Caco-2 (cell line): ENCODE measurements at regions of chr2 and their contacts with region 1.

Region 1: DNA sequence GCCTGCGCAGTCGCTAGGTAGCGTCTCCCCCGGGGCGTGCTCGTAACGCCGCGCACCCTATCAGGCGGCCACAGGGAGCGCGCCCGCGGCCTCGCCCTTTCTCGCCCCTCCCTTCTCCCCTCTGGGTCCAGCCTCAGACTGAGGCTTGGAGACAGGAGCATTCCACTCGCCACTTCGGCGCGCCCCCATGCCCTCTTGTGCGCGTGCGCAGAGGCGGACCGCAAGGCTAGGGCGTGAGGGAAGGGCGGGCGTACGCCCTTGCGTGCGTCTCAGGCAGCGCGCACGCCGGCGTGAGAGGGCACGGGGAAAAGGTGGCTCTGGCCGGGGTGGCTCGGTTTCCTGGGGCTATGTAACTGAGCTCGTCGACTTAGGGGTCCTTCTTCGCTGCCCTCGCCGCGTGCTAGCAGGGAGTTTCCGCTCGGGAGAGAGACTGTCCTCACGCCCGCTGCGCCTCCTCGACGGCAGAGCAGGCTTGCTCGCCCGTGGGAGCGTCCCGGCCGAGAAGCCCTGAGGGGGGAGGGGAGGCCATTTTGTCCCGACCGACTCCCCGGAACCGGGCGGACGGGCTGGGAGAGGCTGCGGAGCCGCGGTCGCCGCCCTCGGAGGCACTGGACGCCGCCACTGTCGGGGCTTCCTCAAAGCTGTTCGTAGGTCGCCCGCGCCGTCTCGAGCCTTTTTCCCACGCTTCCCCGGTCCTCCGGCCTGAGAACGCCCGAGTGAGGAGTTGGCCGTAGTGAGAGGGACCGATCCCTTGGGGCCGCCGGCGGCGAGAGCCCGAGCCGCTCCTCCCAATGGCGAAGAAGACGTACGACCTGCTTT is at the start of gene RAB10:
- DNase-seq: peak; percentile 100
- H3K4me3 ChIP-seq: peak within 1 kb of the TSS; percentile 76
- H3K4me3 Mint-ChIP-seq: peak within 1 kb of the TSS; percentile 76
- H3K27ac Mint-ChIP-seq: peak within 1 kb of the TSS; percentile 60
- H3K4me1 ChIP-seq: 0 out of 2 replicates have a peak, but pooled peaks cover 15% of the 10 kb centered on the region
- H3K4me1 Mint-ChIP-seq: peaks cover 18% of the 10 kb centered on the region
- H3K27me3 ChIP-seq: no peaks in the 10 kb centered on the region
- H3K27me3 Mint-ChIP-seq: no peaks in the 10 kb centered on the region
- CTCF ChIP-seq: no peak
- total RNA-seq, gene RAB10: 203 and 213 TPM in 2 replicates

Region 2: DNA sequence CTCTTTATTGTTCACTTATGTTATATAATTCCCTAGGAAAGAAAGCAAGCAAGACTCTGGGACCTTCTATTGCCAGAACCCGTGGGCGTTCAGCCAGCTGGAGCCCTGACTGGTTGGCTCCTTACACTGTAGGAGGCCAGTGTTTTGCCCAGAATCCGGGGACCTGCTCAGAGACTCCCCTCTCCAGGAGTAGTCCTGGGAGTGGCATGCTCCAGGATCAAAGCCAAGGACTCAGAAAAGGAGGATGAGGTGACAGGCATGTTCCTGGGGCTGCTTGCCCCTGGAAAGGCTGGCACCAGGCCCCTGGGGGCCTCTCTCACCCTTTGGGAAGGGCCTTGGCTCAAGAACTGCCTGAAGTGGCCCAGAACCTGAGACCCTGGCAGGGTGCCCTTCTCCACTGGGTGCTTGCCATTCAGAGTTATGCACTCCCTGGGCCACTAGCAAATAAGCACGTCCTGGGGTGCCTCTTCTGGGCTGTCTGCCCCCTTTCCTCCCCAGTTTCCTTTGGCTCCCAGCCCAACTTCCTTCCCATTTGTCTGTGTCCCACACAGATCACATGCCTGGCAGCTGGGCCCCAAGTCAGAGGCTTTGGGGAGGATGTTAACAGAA is 32.2 kb before region 1 on chr2:
- CTCF ChIA-PET with region 1: interaction called, 9 read pairs
- POLR2A ChIA-PET with region 1: interaction called, 13 read pairs
- intact Hi-C with region 1: loop called (anchors 1 kb)
- DNase-seq: no peak
- H3K4me3 ChIP-seq: no peak overlapping the region
- H3K4me3 Mint-ChIP-seq: no peak overlapping the region
- H3K27ac Mint-ChIP-seq: peak overlapping the region; percentile 95
- H3K4me1 ChIP-seq: peaks cover 37% of the 10 kb centered on the region
- H3K4me1 Mint-ChIP-seq: peaks cover 55% of the 10 kb centered on the region
- H3K27me3 ChIP-seq: no peaks in the 10 kb centered on the region
- H3K27me3 Mint-ChIP-seq: no peaks in the 10 kb centered on the region
- CTCF ChIP-seq: no peak